Right ventricle myocardium inferior (tissue), 1 donor: ENCODE measurements at regions of chr13 and their contacts with region 1.

Region 1: GRCh38 chr13:36999054-36999714 is at the start of gene ALG5:
- DNase-seq: peak; percentile 96
- ATAC-seq: peak; percentile 93
- total RNA-seq, gene ALG5: 10.3 TPM

Region 2: GRCh38 chr13:36420437-36420891 is 578.7 kb before region 1 on chr13:
- intact Hi-C with region 1: loop called (anchors 10 kb)
- DNase-seq: no peak
- ATAC-seq: peak; percentile 62